PC-9 (cell line): ENCODE measurements at regions of chr12 and their contacts with region 1.

Region 1: DNA sequence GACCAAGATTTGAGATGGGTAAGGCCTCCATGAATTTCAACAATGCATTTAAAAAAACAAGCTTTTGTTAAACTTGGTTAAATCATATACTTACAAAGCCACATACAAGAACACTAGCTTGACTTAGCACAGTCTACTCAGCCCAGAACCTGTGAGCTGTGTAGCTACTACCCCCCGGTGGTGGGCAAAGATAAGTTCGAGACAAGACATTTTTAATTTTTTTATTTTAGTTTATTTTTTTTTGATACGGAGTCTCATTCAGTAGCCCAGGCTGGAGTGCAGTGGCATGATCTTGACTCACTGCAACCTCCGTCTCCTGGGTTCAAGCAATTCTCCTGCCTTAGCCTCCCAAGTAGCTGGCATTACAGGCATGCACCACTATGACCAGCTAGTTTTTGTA is 3.7 kb upstream of the NECAP1 start:
- DNase-seq: peak; percentile 39 to 62
- H3K4me3 ChIP-seq: no peak overlapping the region
- H3K27ac ChIP-seq: no peak overlapping the region
- H3K4me1 ChIP-seq: peaks cover 43% of the 10 kb centered on the region
- H3K27me3 ChIP-seq: no peaks in the 10 kb centered on the region
- CTCF ChIP-seq: peak; percentile 67

Region 2: DNA sequence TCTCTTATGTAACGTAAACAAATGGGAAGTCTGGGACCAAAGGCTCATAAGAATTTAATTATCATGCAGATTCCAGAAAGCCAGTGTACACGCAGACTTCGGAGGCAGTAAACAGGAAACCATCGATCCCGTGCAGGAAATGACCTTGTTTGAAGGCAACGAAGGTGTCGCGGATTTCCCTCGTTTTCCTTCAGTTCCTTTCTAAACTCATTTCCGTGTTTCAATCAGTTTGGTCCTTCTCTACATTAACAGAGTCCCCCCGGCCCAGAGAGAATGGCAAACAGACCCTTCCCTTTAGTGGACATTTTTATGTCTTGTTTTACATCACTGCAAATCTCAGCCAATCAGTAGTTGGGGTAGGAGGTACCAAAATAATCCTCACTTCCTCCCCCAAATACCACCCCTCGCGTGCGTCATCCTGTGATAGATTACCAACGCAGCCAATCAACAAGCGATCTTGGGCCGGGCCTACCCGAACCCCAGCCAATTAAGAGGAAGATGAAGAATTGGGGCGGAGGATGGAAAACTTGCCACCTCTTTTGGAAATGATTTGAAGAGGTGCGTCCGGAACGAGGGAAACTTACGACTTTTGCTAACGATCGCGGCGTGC is 52.0 kb before region 1 on chr12:
- CTCF ChIA-PET with region 1: no interaction called
- POLR2A ChIA-PET with region 1: no interaction called
- intact Hi-C with region 1: loop called (anchors 2 kb)
- DNase-seq: peak; percentile 98
- H3K4me3 ChIP-seq: peak overlapping the region; percentile 70
- H3K27ac ChIP-seq: peak overlapping the region; percentile 89
- H3K4me1 ChIP-seq: peaks cover 13% of the 10 kb centered on the region
- H3K27me3 ChIP-seq: no peaks in the 10 kb centered on the region
- CTCF ChIP-seq: no peak

Region 3: GRCh38 chr12:8045952-8046944 is 32.1 kb before region 1 on chr12:
- CTCF ChIA-PET with region 1: interaction called, 13 read pairs
- POLR2A ChIA-PET with region 1: interaction called, 3 read pairs
- intact Hi-C with region 1: loop called (anchors 1 kb)
- DNase-seq: peak; percentile 72 to 76
- H3K4me3 ChIP-seq: no peak overlapping the region
- H3K27ac ChIP-seq: no peak overlapping the region
- H3K4me1 ChIP-seq: no peaks in the 10 kb centered on the region
- H3K27me3 ChIP-seq: no peaks in the 10 kb centered on the region
- CTCF ChIP-seq: peak; percentile 95

Region 4: DNA sequence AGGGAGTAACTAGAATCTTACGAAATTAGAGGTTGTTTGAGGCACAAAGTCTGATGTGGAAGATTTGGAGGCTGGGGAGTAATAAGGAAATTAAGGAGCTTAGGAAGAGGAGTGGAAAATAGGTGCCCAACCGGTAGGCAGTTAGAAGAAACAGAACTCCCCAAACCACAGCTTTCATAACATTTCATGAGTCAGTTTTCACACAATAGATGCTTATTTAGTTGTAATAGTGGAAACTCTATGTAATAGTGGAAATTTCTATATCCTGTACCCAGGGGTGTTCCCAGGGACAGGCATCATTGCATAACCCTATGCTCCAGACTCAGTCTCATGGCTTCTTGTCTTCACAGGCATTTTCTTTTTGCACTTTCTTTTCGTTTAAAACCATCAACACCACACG is 20.6 kb before region 1 on chr12:
- CTCF ChIA-PET with region 1: interaction called, 4 read pairs
- POLR2A ChIA-PET with region 1: interaction called, 17 read pairs
- intact Hi-C with region 1: no loop called
- DNase-seq: peak in 1 of 2 experiments; percentile 60
- H3K4me3 ChIP-seq: no peak overlapping the region
- H3K27ac ChIP-seq: no peak overlapping the region
- H3K4me1 ChIP-seq: peaks cover 15% of the 10 kb centered on the region
- H3K27me3 ChIP-seq: no peaks in the 10 kb centered on the region
- CTCF ChIP-seq: no peak